Activated CD4-positive, alpha-beta memory T cell treated with anti-CD3 and anti-CD28 coated beads for 36 hours (primary cell): ENCODE measurements at regions of chr10 and their contacts with region 1.

Region 1: GRCh38 chr10:6114805-6115341 is 26.0 kb downstream of the RBM17 start:
- DNase-seq: peak; percentile 46
- H3K4me3 Mint-ChIP-seq: no peak overlapping the region
- H3K27ac Mint-ChIP-seq: peak overlapping the region; percentile 82
- H3K4me1 Mint-ChIP-seq: peaks cover 42% of the 10 kb centered on the region
- H3K27me3 Mint-ChIP-seq: no peaks in the 10 kb centered on the region

Region 2: GRCh38 chr10:6128591-6129251 is 13.8 kb after region 1 on chr10:
- CTCF ChIA-PET with region 1: interaction called, 8 read pairs
- POLR2A ChIA-PET with region 1: interaction called, 11 read pairs
- intact Hi-C with region 1: loop called (anchors 1 kb)
- DNase-seq: peak; percentile 11
- H3K4me3 Mint-ChIP-seq: no peak overlapping the region
- H3K27ac Mint-ChIP-seq: no peak overlapping the region
- H3K4me1 Mint-ChIP-seq: peaks cover 32% of the 10 kb centered on the region
- H3K27me3 Mint-ChIP-seq: no peaks in the 10 kb centered on the region